ENCODE measurements at regions of chrX and their contacts with region 1.

Region 1: DNA sequence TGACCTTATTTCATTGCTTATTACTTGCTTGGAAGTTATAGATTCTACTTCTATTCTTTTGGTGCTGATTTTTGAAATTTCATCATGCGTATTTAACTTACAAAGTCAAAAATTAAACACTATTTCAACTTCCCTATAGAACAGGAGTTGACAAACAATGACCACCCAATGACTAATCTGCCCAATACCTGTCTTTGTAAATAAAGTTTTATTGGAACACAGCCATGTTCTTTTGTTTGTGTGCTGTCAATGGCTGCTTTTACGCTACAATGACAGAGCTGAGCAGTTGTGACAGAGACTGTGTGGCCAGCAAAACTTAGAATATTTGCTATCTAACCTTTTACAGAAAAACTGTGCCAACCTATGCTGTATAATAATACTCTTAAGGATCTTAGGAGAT is 96.1 kb upstream of the RAI2 start:
- DNase-seq: no peak
- H3K4me3 ChIP-seq: no peak overlapping the region
- H3K27ac ChIP-seq: no peak overlapping the region
- H3K4me1 ChIP-seq: no peaks in the 10 kb centered on the region
- H3K27me3 ChIP-seq: no peaks in the 10 kb centered on the region
- CTCF ChIP-seq: no peak
- EP300 ChIP-seq: no peak
- POLR2A ChIP-seq: no peak

Region 2: DNA sequence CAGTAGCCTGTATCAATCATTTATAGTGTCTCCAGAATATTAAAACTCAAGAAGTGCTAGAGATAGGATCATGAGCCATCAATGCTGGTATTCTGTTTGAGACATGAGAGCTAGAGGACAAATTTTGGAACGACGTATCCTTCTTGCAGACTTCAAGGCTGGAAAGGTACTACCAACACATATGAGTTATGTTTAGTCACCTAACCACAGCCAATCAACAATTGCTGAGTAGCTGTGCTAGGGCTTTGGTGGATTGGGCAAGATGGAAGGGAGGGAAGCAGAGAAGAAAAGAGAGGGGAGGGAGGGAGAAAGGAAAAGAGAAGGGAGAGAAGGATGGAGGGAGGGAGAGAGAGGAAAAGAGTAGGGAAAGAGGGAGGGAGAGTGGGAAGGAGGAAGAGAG is 74.5 kb before region 1 on chrX:
- in situ Hi-C with region 1: no loop called
- intact Hi-C with region 1: loop called (anchors 2 kb)
- DNase-seq: no peak
- H3K4me3 ChIP-seq: no peak overlapping the region
- H3K27ac ChIP-seq: no peak overlapping the region
- H3K4me1 ChIP-seq: no peaks in the 10 kb centered on the region
- H3K27me3 ChIP-seq: no peaks in the 10 kb centered on the region
- CTCF ChIP-seq: no peak
- EP300 ChIP-seq: no peak
- POLR2A ChIP-seq: no peak

Measured in transverse colon (tissue), 4 donors.